ENCODE measurements at regions of chr11 and their contacts with region 1.

Region 1: GRCh38 chr11:62787005-62787759 is at the start of gene TMEM179B:
- DNase-seq: peak; percentile 99
- H3K4me3 Mint-ChIP-seq: peak within 1 kb of the TSS; percentile 93
- H3K27ac Mint-ChIP-seq: peak within 1 kb of the TSS; percentile 92
- H3K4me1 Mint-ChIP-seq: peaks cover 37% of the 10 kb centered on the region
- H3K27me3 Mint-ChIP-seq: no peaks in the 10 kb centered on the region
- total RNA-seq, gene TMEM179B: 32.9 and 36.3 TPM in 2 replicates

Region 2: GRCh38 chr11:62556108-62556871 is 230.9 kb before region 1 on chr11:
- intact Hi-C with region 1: no loop called
- DNase-seq: peak; percentile 96
- H3K4me3 Mint-ChIP-seq: peak overlapping the region; percentile 78
- H3K27ac Mint-ChIP-seq: peak overlapping the region; percentile 98
- H3K4me1 Mint-ChIP-seq: peaks cover 86% of the 10 kb centered on the region
- H3K27me3 Mint-ChIP-seq: peaks cover 2% of the 10 kb centered on the region

Region 3: DNA sequence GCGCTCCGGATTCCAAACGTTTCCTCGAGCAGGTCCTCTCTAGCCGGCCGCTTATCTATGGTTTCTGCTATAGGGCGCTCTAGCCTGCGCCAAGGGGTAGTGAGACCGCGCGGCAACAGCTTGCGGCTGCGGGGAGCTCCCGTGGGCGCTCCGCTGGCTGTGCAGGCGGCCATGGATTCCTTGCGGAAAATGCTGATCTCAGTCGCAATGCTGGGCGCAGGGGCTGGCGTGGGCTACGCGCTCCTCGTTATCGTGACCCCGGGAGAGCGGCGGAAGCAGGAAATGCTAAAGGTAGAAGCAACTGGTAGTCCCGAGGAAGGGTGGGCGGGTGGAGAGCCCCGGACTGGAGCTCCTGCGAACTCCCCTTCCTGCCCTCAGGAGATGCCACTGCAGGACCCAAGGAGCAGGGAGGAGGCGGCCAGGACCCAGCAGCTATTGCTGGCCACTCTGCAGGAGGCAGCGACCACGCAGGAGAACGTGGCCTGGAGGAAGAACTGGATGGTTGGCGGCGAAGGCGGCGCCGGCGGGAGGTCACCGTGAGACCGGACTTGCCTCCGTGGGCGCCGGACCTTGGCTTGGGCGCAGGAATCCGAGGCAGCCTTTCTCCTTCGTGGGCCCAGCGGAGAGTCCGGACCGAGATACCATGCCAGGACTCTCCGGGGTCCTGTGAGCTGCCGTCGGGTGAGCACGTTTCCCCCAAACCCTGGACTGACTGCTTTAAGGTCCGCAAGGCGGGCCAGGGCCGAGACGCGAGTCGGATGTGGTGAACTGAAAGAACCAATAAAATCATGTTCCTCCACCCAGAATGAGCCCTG is 115.4 kb before region 1 on chr11 and contains the starts of genes LBHD1 and UQCC3:
- intact Hi-C with region 1: no loop called
- DNase-seq: peak; percentile 94
- H3K4me3 Mint-ChIP-seq: peak within 1 kb of the TSS; percentile 88
- H3K27ac Mint-ChIP-seq: peak within 1 kb of the TSS; percentile 92
- H3K4me1 Mint-ChIP-seq: peaks cover 38% of the 10 kb centered on the region
- H3K27me3 Mint-ChIP-seq: no peaks in the 10 kb centered on the region
- total RNA-seq, gene LBHD1: 21.5 and 23.0 TPM in 2 replicates
- total RNA-seq, gene UQCC3: 8.6 and 9.4 TPM in 2 replicates

Region 4: DNA sequence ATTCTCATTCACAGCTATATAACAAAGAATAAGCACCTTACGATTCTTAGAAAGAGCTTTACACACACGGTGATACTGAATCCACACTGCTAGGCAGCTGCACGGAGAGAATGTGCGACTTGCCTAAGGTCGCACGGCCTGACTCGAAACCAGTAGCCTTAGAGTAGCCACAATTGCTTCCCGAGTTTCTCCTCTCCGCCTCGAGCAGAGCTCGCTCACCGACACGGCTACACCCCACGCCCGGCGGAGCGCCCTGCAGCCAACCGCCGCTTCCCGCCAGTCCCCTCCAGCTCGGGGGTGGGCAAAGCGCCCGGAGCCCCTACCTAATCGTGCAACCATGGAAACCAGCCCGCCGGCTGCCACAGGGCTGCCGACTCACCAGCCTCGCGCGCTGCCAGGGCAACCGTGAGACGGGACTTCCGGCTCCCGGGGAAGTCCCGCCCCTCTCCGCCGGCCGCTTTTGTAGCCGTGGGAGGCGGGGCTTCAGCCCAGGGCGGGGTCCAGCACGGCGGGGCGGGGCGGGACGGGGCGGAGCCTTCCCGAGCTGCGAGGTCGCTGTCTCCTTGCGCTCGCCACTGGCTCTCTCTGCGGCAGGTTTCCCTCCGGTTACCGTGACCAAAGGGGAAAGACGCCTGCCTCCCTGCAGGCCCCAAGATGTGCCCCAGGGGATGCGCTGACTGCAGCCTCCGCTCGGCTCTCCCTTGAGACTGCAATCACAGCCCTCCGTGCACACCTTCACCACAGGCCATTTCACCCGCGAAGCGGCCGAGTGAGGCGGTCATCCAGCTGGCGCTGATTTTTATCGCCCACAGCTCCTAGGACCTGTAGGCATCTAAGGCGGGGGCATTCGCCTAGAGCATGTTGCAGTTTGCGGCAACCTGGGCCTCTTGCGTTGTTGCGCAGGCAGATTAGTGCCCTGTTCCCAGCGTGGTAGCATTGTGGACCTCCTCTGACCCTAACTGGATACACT is 81.0 kb before region 1 on chr11:
- intact Hi-C with region 1: loop called (anchors 2 kb)
- DNase-seq: peak; percentile 97
- H3K4me3 Mint-ChIP-seq: peak overlapping the region; percentile 96
- H3K27ac Mint-ChIP-seq: peak overlapping the region; percentile 89
- H3K4me1 Mint-ChIP-seq: peaks cover 33% of the 10 kb centered on the region
- H3K27me3 Mint-ChIP-seq: no peaks in the 10 kb centered on the region

Region 5: GRCh38 chr11:62771144-62772021 is 15.8 kb before region 1 on chr11 and contains the start of gene TAF6L:
- intact Hi-C with region 1: loop called (anchors 1 kb)
- DNase-seq: peak; percentile 98
- H3K4me3 Mint-ChIP-seq: peak within 1 kb of the TSS; percentile 93
- H3K27ac Mint-ChIP-seq: peak within 1 kb of the TSS; percentile 96
- H3K4me1 Mint-ChIP-seq: peaks cover 26% of the 10 kb centered on the region
- H3K27me3 Mint-ChIP-seq: no peaks in the 10 kb centered on the region
- total RNA-seq, gene TAF6L: 20.1 and 20.2 TPM in 2 replicates

Region 6: DNA sequence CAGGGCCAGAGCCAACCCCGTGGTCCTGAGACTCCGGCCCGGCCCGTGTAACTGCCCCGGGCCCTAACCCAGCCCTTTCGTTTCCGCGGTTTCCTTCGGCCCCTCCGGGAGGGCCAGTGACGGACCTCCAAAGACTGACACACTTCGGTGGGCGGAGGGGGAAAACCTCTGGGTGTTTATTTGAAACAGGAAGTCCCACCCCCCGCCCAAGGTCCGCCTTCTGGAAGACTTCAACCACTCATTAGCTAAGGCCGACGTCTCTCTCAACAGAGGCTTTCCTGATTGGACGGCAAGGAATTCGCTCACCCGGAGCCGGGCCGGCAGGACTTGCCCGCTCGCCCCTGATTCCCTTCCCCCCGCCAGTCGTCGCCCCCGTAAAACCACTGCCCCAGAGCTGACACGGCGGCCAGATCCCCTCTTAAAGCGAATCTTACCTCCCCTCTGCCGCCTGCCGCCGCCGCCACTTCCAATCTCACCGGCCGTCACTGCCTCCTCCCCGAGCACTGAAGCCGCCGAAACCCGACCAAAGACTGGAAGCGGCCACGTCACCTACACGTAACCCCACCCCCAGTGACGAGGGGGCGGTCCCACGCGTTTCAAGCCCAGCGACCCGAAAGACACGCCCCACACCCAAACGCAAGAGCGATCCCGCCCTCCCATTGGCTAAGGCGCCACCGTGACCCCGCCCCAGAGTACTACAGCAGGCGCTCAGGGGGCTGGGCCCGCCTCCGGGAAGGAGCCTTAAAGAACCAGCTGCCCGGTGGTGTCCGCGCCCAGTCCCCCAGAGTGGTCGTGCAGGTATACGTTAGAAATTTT is 44.5 kb after region 1 on chr11 and contains the start of gene STX5:
- intact Hi-C with region 1: loop called (anchors 1 kb)
- DNase-seq: peak; percentile 100
- H3K4me3 Mint-ChIP-seq: peak within 1 kb of the TSS; percentile 89
- H3K27ac Mint-ChIP-seq: peak within 1 kb of the TSS; percentile 97
- H3K4me1 Mint-ChIP-seq: peaks cover 38% of the 10 kb centered on the region
- H3K27me3 Mint-ChIP-seq: no peaks in the 10 kb centered on the region
- total RNA-seq, gene STX5: 28.1 and 33.5 TPM in 2 replicates

Region 7: DNA sequence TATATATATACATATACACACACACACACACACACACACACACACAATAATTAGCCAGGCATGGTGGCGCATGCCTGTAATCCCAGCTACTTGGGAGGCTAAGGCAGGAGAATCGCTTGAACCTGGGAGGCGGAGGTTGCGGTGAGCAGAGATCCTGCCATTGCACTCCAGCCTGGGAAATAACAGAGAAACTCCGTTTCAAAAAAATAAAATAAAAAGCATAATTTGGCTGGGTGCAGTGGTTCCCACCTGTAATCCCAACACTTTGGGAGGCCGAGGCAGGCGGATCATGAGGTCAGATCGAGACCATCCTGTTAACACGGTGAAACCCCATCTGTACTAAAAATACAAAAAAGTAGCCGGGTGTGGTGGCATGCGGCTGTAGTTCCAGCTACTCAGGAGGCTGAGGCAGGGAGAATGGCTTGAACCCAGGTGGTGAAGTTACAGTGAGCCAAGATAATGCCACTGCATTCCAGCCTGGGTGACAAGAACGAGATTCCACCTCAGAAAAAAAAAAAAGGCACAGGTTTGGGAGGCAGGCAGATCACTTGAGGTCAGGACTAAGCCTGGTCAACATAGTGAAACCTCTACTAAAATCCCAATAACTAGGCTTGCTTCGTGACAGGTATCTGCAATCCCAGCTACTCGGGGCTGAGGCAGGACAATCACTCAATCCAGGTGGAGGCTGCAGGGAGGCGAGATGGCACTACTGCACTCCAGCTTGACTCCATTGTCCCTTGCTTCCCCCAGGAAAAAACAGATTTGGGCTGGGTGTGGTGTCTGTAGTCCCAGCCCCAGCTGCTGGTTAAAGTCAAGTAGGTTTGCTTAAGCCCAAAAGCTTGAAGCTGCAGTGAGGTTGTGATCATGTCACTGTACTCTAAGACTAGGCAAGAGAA is 64.0 kb after region 1 on chr11:
- intact Hi-C with region 1: no loop called
- DNase-seq: no peak
- H3K4me3 Mint-ChIP-seq: peak overlapping the region; percentile 33
- H3K27ac Mint-ChIP-seq: peak overlapping the region; percentile 63
- H3K4me1 Mint-ChIP-seq: peaks cover 31% of the 10 kb centered on the region
- H3K27me3 Mint-ChIP-seq: peaks cover 11% of the 10 kb centered on the region

Measured in activated CD4-positive, alpha-beta T cell treated with anti-CD3 and anti-CD28 coated beads, Interleukin-2, amount 10 ng/mL, durations not matched to agents 24 days and 14 days (primary cell).